ENCODE measurements at regions of chr7 and their contacts with region 1.

Region 1: DNA sequence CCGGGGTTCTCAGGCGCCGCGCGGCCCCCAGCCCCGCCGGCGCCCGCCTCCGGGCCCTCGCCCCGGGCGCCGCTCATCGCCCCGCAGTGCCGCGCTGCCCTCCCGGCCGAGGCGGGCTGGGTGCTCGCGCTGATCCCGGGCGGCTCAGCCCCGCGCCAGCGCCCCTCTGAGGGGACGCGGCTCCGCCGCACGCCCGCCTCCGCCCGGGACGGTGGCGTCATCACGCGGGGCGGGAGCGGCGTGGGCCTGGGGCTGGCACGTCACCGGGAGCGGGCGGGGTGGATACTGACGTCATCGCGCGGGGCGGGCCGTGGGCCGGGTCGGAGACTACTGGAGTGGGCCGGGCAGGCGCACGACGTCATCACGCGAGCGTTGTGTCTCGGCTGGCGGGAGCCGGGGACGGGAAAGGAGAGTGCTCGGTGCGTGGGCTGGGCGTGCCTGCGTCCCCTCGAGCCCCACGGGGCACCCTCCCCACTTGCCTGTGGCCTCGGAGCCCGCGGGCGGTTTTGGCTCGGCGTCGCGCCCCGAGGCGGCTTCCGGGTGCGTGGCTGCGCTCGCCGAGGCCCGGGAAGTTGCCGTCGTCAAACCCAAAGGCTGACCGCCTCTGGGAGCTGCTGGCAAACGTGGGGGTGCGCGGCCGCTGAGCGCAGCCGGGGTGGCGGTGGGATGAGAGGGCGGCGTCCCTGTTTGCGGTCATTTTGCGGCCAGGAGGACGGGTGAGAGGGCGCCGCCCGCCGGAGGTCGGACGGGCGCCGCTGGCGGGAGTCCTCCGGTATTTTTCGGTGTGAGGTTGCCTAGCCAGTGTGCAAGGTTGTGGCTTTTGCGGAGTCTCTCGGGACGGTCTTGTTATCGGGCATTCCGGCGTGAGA is at the start of gene ESYT2:
- DNase-seq: peak; percentile 99 to 100 (median 99)
- ATAC-seq: peak; percentile 81 to 82
- H3K4me3 Mint-ChIP-seq: peak within 1 kb of the TSS; percentile 91 to 99 (median 96)
- H3K27ac Mint-ChIP-seq: peak within 1 kb of the TSS; percentile 83 to 99 (median 96)
- H3K4me1 Mint-ChIP-seq: peaks cover 11 to 41% (median 33%) of the 10 kb centered on the region in 4 donors
- H3K27me3 Mint-ChIP-seq: no peaks in the 10 kb centered on the region
- polyA plus RNA-seq, gene ESYT2: 58.6 to 93.3 (median 79.8) TPM

Region 2: DNA sequence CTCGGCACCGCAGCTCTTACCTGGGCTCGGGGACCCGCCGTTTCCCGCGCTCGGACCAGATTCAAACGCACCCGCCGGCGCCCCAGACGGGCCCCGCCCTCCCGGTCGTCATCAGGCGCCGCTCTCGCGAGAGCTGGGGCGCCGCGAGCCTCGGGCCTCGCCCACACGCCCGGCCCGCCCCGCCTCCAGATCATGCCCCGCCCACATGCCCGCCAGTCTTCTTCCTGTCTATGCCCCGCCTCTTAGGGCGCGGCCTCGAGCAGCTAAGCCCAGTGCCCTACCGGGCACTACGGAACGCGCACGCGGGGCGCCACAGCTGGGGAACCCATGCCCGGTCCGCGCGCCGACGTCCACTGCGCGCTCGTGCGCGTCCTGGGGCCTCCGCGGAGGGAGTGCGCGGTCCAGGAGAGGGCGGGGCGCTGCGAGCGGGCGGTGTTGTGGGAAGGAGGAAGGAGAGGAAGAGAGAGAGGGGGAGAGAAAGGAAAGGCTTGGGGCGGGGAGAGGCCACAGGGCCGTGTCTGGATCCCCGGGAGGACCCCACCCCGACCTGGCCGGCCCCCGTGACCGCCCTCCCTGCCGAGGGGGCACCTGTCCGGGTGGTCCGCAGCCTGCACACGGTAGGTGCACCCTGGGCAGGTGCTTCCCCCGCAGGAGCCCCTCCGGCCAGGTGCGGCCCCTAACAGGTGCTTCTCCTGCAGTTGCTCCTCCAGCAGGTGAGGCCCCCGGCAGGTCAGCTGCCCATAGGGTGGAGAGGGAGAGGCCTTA is 124.7 kb before region 1 on chr7 and contains the start of gene NCAPG2:
- POLR2A ChIA-PET with region 1: interaction called, 18 read pairs
- DNase-seq: peak; percentile 90 to 99 (median 97)
- ATAC-seq: peak; percentile 96 to 97
- H3K4me3 Mint-ChIP-seq: peak within 1 kb of the TSS; percentile 78 to 98 (median 88)
- H3K27ac Mint-ChIP-seq: peak within 1 kb of the TSS; percentile 43 to 96 (median 82)
- H3K4me1 Mint-ChIP-seq: peaks cover 12 to 21% (median 17%) of the 10 kb centered on the region in 4 donors
- H3K27me3 Mint-ChIP-seq: no peaks in the 10 kb centered on the region
- polyA plus RNA-seq, gene NCAPG2: 2.4 to 3.7 (median 2.6) TPM

Region 3: DNA sequence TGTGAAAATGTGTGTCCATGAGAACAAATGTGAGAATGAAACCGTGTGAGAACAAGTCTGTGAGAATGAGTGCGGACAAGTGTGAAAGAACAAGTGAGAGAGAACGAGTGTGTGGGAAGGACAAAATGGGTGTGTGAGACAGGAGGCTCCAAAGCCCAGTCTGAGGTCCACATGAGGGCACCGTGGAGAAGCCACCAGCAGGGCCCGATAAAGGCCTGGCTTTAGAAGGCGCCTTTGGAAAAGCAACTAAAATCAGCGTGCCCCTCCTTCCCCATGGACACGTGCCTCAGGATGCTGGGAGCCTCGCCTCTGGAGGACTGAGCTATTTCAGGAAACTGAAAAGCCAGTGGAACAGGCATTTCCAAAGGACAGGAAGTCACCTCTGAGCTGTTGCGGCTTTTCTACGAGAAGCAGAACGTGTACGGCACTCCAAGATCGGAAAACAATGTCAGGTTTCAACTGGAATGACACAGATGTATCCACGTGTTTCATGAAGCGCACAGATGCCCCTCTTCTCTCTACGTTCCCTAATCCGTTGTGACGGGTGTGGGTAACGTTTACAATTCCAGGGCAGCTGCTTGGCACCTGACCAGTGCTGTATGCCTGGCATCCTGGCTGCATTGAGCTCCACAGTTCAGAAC is 46.7 kb before region 1 on chr7:
- POLR2A ChIA-PET with region 1: interaction called, 10 read pairs
- DNase-seq: peak in 2 of 10 donors; percentile 4 to 15
- ATAC-seq: peak; percentile 24
- H3K4me3 Mint-ChIP-seq: no peak overlapping the region
- H3K27ac Mint-ChIP-seq: no peak overlapping the region
- H3K4me1 Mint-ChIP-seq: peaks cover 1 to 13% (median 8%) of the 10 kb centered on the region in 4 donors
- H3K27me3 Mint-ChIP-seq: no peaks in the 10 kb centered on the region

Region 4: DNA sequence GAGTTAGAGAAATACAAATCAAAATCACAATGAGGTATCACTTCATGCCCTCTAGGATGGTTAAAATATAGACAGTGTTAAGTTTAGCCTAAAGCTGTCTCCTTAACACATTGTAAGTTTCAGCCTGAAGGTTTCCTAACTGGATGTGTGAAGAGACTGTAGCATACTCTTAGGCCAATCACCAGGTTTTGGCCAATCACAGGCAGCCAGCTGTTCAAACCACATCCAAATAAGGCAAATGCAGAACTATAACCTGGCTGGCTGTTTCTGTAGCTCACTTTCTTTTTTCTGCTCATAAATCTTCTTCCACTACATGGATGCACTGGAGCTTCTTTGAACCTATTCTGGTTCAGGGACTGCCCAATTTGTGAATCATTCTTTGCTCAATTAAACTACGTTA is 20.0 kb before region 1 on chr7:
- POLR2A ChIA-PET with region 1: interaction called, 150 read pairs
- DNase-seq: peak in 1 of 10 donors; percentile 19
- ATAC-seq: no peak
- H3K4me3 Mint-ChIP-seq: peak overlapping the region in 9 of 10 donors; percentile 21 to 82 (median 49)
- H3K27ac Mint-ChIP-seq: peak overlapping the region; percentile 87 to 100 (median 96)
- H3K4me1 Mint-ChIP-seq: peaks cover 44 to 88% (median 79%) of the 10 kb centered on the region in 4 donors
- H3K27me3 Mint-ChIP-seq: peaks cover 0 to 1% (median 0%) of the 10 kb centered on the region in 5 donors

Region 5: DNA sequence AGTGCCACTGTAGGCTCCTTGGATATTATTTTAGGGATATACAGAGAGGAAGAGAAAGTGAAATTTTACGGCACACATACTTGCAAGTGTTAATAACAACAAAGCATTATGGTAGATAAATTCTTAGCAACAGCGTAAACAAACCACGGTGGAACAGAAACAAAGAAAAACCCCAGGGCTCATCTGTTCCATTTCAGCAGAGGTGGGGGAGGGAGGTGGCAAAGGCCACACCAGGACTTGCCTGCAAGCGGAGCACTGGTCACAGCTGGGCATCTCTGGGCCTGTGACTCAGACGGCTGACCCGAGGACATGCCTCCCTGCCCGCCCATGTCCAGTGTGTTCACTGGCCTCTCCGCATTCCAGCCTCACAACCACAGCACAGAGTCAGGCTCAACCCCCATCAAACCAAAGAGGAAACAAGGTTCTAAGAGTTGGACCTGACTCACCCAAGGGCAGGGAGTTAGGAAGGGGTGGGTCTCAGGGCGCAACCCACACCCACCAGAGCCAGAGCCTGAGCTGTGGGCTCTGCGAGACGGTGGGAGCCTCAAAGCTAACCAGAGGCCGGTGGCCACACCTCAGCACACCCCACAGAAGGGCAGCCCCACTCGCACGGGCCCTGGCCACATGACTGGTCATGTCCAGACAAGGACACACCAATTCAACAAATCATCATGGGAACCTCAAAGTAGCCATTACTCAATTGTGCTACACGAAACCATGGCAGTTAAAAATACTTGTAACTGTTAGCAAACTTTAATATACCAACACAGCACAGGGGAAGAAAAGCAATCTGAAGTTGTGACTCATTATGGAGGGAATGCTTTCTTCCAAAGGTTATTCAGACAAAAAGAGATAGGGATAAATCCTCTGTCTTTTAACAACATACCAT is 11.0 kb before region 1 on chr7:
- POLR2A ChIA-PET with region 1: interaction called, 150 read pairs
- DNase-seq: peak; percentile 54 to 88 (median 80)
- ATAC-seq: peak; percentile 65 to 66
- H3K4me3 Mint-ChIP-seq: peak overlapping the region; percentile 79 to 93 (median 88)
- H3K27ac Mint-ChIP-seq: peak overlapping the region; percentile 94 to 100 (median 98)
- H3K4me1 Mint-ChIP-seq: peaks cover 46 to 94% (median 88%) of the 10 kb centered on the region in 4 donors
- H3K27me3 Mint-ChIP-seq: no peaks in the 10 kb centered on the region

Region 6: DNA sequence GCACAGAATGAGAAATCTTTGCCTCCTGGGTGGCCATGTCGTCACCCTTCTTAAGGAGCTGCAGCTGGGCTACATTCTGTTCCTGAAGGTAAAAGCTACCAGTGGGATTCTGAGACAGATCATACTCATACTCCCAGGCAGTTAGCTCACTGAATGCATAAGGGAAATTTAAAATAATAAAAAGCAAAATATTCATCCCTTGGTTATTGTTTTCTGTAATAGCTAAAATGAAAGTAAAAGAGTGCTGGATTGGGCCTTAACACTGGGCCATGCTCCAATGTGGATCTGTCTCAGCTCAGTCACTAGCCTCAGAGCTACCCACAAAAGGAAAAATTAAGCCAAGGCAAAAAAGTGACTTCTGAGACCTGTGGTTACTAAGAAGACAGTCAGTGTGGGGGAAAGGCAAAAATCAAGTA is 17.9 kb after region 1 on chr7:
- POLR2A ChIA-PET with region 1: interaction called, 14 read pairs
- DNase-seq: no peak
- ATAC-seq: peak; percentile 64 to 93
- H3K4me3 Mint-ChIP-seq: peak overlapping the region; percentile 64 to 92 (median 86)
- H3K27ac Mint-ChIP-seq: peak overlapping the region; percentile 41 to 98 (median 94)
- H3K4me1 Mint-ChIP-seq: peaks cover 9 to 35% (median 26%) of the 10 kb centered on the region in 4 donors
- H3K27me3 Mint-ChIP-seq: no peaks in the 10 kb centered on the region

Measured in naive thymus-derived CD8-positive, alpha-beta T cell (primary cell).